Spleen (tissue), 13 donors: ENCODE measurements at regions of chr11 and their contacts with region 1.

Region 1: DNA sequence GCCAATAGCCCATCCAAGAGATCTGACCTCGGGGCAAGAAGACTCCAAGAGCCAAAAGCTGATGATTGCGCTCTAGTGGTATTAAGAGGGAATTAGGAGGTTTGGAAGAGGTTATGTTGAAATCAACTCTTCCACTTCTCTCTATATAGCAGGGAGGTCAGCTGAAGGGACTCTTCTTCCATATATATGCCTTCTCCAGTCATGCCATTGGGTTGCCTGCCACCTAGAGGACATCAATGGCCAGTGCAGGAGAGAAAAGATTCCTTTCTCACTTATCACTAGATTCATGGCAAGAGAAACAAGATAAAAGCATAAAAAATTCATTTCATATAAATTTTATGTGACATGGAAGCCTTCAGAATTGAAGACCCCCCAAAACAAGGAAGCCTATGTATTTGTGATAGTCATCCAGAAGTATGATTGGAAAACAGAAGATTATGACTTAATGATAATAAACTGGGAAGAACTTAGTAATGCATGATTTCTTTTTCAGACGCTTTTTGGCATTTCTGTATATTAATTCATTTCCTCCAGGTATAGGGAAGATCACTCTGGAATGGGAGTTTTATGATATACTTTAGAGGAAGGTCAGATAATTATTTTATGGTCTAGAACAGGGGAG is 435.1 kb upstream of the DDI1 start:
- DNase-seq: no peak
- H3K4me3 ChIP-seq: no peak overlapping the region
- H3K27ac ChIP-seq: no peak overlapping the region
- H3K4me1 ChIP-seq: no peaks in the 10 kb centered on the region
- H3K27me3 ChIP-seq: peaks cover 0 to 14% (median 0%) of the 10 kb centered on the region in 7 donors
- CTCF ChIP-seq: peak; percentile 45 to 82 (median 71)
- POLR2A ChIP-seq: no peak

Region 2: DNA sequence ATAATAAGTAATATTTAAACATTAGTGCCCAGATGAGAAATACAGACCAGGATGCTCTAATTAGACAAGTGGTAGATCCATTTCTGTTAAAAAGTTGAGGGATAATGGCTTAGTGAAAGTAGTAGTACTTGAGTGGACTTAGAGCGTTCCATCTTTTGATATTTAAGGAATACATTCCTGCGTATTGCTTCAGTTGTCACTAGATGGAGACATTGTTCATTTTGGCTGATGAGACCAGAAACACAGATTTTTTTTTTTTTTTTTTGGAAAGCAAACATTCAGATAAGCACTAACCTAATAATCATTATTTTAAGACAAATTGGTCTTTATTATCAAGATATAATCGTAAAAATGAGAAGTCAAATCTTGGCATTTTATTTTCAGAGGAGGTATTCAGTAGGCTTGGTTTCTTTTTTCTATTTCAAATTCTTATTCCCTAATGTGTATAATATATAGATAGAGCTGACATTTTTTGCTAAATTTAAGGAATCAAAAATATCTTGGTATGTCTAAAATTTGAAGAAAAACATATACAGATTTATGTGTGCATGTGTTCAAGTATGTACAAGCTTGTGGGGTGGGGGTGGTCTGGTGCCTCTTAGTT is 399.2 kb before region 1 on chr11:
- intact Hi-C with region 1: loop called (anchors 10 kb)
- DNase-seq: no peak
- H3K4me3 ChIP-seq: no peak overlapping the region
- H3K27ac ChIP-seq: no peak overlapping the region
- H3K4me1 ChIP-seq: no peaks in the 10 kb centered on the region
- H3K27me3 ChIP-seq: no peaks in the 10 kb centered on the region
- CTCF ChIP-seq: peak in 7 of 11 experiments; percentile 6 to 43 (median 35)
- POLR2A ChIP-seq: no peak

Region 3: DNA sequence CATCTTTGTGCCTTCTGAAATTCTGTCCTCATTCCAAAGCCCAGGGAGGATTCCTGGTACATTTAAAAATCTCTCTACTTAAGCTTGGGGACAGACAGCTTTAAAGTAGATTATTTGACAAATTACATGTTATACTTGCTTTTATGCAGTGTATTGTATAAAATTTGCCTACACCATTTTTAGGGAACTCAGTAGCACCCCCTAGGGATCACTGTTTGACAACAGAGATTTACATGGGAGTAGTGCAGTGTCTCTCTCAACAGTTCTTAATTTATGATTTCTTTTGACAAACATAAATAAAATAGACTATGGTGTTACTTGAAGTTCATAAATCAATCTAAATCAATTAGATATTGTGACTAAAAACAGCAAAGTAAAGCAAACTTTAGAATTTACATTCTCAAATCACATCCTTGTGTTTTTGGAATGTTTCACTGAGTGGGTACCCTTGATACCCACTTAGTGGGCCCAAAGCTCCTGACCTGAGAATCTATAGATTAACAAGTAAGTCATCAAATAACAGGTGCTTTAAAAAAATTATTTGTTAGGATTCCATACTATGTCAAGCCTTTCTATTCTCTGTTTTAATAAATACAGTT is 63.3 kb before region 1 on chr11:
- intact Hi-C with region 1: no loop called
- DNase-seq: no peak
- H3K4me3 ChIP-seq: no peak overlapping the region
- H3K27ac ChIP-seq: no peak overlapping the region
- H3K4me1 ChIP-seq: no peaks in the 10 kb centered on the region
- H3K27me3 ChIP-seq: no peaks in the 10 kb centered on the region
- CTCF ChIP-seq: peak in 2 of 11 experiments; percentile 12 to 17
- POLR2A ChIP-seq: no peak